ENCODE measurements at regions of chr22 and their contacts with region 1.

Region 1: DNA sequence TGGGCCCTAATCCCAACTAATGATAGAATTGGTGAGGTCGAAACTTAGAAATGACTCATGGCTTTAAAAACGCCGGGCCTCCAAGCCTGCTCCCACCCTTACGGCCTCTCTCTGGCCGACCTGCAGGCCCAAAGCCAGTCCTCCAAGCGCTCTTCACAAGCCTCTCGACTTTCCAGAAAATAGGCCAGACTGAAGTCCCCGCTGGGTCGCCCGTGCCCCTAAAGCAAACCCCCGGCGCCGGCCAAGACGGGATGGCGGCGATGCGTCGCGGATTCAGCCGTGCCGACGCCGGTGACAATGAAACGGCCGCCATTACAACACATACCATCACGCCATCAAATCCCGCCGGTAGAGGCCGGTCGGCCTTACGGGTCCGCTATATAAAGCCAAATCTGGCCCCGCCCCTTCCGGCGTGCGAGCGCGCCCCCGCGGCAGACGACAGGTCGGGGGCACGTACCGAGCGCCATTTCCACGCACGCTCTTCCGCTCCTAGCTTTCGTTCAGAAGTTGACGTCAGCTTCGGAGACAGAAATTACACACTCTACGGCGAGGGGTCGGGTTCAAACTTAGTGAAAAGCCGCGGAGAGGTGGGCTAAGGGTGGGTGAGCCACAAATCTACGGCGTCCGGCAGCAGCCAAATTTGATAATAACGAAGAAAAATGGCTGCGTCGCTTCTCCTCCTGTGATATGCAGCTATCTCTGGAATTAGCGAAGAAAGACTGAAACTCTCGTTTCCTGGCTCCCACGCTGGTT is at the start of gene RPL3:
- DNase-seq: peak; percentile 96 to 99
- ATAC-seq: peak; percentile 82 to 88 (median 84)
- H3K4me3 ChIP-seq: peak within 1 kb of the TSS; percentile 91
- H3K27ac ChIP-seq: peak within 1 kb of the TSS; percentile 95
- H3K4me1 ChIP-seq: peaks cover 37% of the 10 kb centered on the region
- H3K27me3 ChIP-seq: no peaks in the 10 kb centered on the region
- CTCF ChIP-seq: peak; percentile 24
- total RNA-seq, gene RPL3: 266 to 539 (median 329) TPM

Region 2: GRCh38 chr22:38872172-38872830 is 447.1 kb before region 1 on chr22 and contains the start of gene CBX6:
- intact Hi-C with region 1: loop called in 1 of 2 experiments (anchors 10 kb)
- DNase-seq: peak; percentile 98
- ATAC-seq: peak; percentile 88 to 91 (median 90)
- H3K4me3 ChIP-seq: peak within 1 kb of the TSS; percentile 97
- H3K27ac ChIP-seq: peak within 1 kb of the TSS; percentile 94
- H3K4me1 ChIP-seq: peaks cover 20% of the 10 kb centered on the region
- H3K27me3 ChIP-seq: no peaks in the 10 kb centered on the region
- CTCF ChIP-seq: no peak
- total RNA-seq, gene CBX6: 15.1 to 21.0 (median 17.4) TPM

Region 3: DNA sequence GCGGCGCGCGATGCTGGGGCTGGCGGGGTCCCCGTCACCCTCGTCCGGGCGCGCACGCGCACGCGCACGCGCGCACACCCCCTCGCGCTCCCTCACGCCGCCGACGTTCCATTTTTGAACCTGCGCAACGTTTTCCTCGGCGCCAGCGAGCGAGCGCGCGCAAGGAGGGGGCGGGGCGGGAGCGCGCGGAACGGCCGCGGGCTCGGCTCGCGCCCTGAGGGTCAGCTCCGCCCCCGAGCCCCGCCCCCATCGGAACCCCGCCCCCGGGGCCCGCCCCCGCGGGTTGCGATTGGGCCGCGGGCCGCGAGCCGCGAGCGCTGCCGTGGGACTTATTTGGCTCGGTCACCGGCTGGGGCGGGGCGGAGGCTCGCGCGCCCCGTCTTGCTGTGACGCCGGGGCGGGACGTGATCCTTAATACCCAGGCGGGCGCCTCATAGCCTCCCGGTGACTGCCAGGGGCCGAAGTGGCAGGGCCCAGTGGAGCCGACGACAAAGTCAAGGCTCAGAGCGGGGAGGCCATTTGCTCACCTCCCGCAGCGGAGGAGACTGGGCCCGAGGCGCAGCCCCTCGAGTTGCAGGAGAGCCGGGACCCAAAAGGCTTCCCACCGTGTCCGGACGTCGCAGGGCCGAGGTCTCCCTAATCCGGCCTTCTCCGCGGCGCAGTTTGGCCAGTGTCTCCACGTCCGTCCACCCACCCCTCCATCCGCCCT is 166.8 kb before region 1 on chr22 and contains the start of gene CBX7:
- intact Hi-C with region 1: loop called in 1 of 2 experiments (anchors 5 kb)
- DNase-seq: peak; percentile 96 to 97
- ATAC-seq: peak; percentile 93 to 95 (median 94)
- H3K4me3 ChIP-seq: peak within 1 kb of the TSS; percentile 94
- H3K27ac ChIP-seq: peak within 1 kb of the TSS; percentile 94
- H3K4me1 ChIP-seq: peaks cover 43% of the 10 kb centered on the region
- H3K27me3 ChIP-seq: no peaks in the 10 kb centered on the region
- CTCF ChIP-seq: no peak
- total RNA-seq, gene CBX7: 38.0 to 46.8 (median 39.2) TPM

Region 4: DNA sequence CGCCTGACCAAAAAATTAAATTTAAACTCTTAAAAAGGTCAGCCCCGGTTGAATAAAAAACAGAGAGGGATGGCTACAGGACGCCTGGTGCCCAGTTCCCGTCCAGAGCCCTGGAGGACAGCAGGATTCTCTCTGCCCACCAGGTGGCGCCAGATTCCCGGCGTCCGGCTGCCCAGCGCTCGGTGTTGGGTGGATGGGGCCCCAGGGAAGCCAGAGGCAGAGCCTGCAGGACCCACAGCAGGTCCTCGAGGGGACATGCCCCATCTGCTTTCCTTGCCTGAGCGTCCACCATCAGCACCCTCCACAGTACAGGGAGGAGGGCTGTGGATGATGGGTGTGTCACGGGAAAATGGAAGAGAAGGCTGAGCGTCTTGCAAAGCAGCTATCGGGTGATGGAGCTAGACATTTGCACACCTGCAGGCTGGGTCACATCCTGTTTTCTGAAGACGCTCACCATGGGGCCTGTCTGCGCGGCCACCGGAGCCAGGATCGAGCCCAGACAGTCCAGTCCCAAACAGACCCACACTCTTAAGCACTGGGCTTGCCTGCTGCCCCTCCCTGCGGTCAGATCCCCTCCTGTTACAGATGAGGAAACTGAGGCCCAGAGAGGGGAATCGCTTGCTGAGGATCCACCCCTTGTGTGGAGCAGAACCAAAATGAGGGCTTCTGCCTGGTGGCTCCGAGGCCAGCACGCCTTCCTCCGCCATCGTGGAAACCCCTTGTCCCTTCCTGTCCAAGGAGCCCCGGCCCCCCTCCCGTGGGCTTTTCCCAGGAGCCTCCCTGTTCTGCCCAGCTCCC is 148.4 kb before region 1 on chr22:
- intact Hi-C with region 1: loop called in 1 of 2 experiments (anchors 2 kb)
- DNase-seq: peak; percentile 87 to 93
- ATAC-seq: peak; percentile 87 to 95 (median 90)
- H3K4me3 ChIP-seq: no peak overlapping the region
- H3K27ac ChIP-seq: no peak overlapping the region
- H3K4me1 ChIP-seq: peaks cover 47% of the 10 kb centered on the region
- H3K27me3 ChIP-seq: no peaks in the 10 kb centered on the region
- CTCF ChIP-seq: peak; percentile 96

Measured in psoas muscle (tissue), 8 donors.